CD4-positive, alpha-beta memory T cell (primary cell): ENCODE measurements at regions of chr16 and their contacts with region 1.

Region 1: GRCh38 chr16:19521471-19522396 is at the start of gene GDE1:
- DNase-seq: peak; percentile 88 to 93 (median 89)
- H3K4me3 ChIP-seq: peak within 1 kb of the TSS; percentile 87 to 89
- H3K4me3 Mint-ChIP-seq: peak within 1 kb of the TSS; percentile 95 to 99 (median 96)
- H3K27ac ChIP-seq: peak within 1 kb of the TSS; percentile 78
- H3K27ac Mint-ChIP-seq: peak within 1 kb of the TSS; percentile 73 to 98 (median 95)
- H3K4me1 ChIP-seq: peaks cover 70% of the 10 kb centered on the region
- H3K4me1 Mint-ChIP-seq: peaks cover 45 to 74% (median 55%) of the 10 kb centered on the region in 4 donors
- H3K27me3 ChIP-seq: no peaks in the 10 kb centered on the region
- H3K27me3 Mint-ChIP-seq: no peaks in the 10 kb centered on the region
- total RNA-seq, gene GDE1: 23.2 to 23.3 TPM

Region 2: GRCh38 chr16:18789850-18790724 is 731.6 kb before region 1 on chr16 and contains the start of gene RPS15A:
- CTCF ChIA-PET with region 1: no interaction called
- POLR2A ChIA-PET with region 1: no interaction called
- intact Hi-C with region 1: loop called (anchors 1 kb)
- DNase-seq: peak; percentile 90 to 98 (median 95)
- H3K4me3 ChIP-seq: peak within 1 kb of the TSS; percentile 77 to 98
- H3K4me3 Mint-ChIP-seq: peak within 1 kb of the TSS; percentile 91 to 98 (median 96)
- H3K27ac ChIP-seq: peak within 1 kb of the TSS; percentile 80
- H3K27ac Mint-ChIP-seq: peak within 1 kb of the TSS; percentile 93 to 97 (median 96)
- H3K4me1 ChIP-seq: peaks cover 43% of the 10 kb centered on the region
- H3K4me1 Mint-ChIP-seq: peaks cover 36 to 53% (median 46%) of the 10 kb centered on the region in 4 donors
- H3K27me3 ChIP-seq: no peaks in the 10 kb centered on the region
- H3K27me3 Mint-ChIP-seq: no peaks in the 10 kb centered on the region
- total RNA-seq, gene RPS15A: 3,088 to 3,151 TPM

Region 3: GRCh38 chr16:18932243-18932981 is 589.3 kb before region 1 on chr16:
- CTCF ChIA-PET with region 1: no interaction called
- POLR2A ChIA-PET with region 1: no interaction called
- intact Hi-C with region 1: loop called (anchors 10 kb)
- DNase-seq: no peak
- H3K4me3 ChIP-seq: no peak overlapping the region
- H3K4me3 Mint-ChIP-seq: no peak overlapping the region
- H3K27ac ChIP-seq: no peak overlapping the region
- H3K27ac Mint-ChIP-seq: no peak overlapping the region
- H3K4me1 ChIP-seq: no peaks in the 10 kb centered on the region
- H3K4me1 Mint-ChIP-seq: peaks cover 0 to 4% (median 0%) of the 10 kb centered on the region in 4 donors
- H3K27me3 ChIP-seq: no peaks in the 10 kb centered on the region
- H3K27me3 Mint-ChIP-seq: peaks cover 0 to under 1% of the 10 kb centered on the region in 2 donors

Region 4: GRCh38 chr16:19067349-19068236 is 454.1 kb before region 1 on chr16 and contains the start of gene COQ7:
- CTCF ChIA-PET with region 1: no interaction called
- POLR2A ChIA-PET with region 1: interaction called, 4 read pairs
- intact Hi-C with region 1: loop called (anchors 1 kb)
- DNase-seq: peak; percentile 99 to 100 (median 100)
- H3K4me3 ChIP-seq: peak within 1 kb of the TSS; percentile 79 to 99
- H3K4me3 Mint-ChIP-seq: peak within 1 kb of the TSS; percentile 92 to 96 (median 94)
- H3K27ac ChIP-seq: peak within 1 kb of the TSS; percentile 100
- H3K27ac Mint-ChIP-seq: peak within 1 kb of the TSS; percentile 93 to 99 (median 99)
- H3K4me1 ChIP-seq: peaks cover 9% of the 10 kb centered on the region
- H3K4me1 Mint-ChIP-seq: peaks cover 3 to 24% (median 14%) of the 10 kb centered on the region in 4 donors
- H3K27me3 ChIP-seq: no peaks in the 10 kb centered on the region
- H3K27me3 Mint-ChIP-seq: peaks cover 0 to 6% of the 10 kb centered on the region in 2 donors
- total RNA-seq, gene COQ7: 16.2 to 19.2 TPM

Region 5: DNA sequence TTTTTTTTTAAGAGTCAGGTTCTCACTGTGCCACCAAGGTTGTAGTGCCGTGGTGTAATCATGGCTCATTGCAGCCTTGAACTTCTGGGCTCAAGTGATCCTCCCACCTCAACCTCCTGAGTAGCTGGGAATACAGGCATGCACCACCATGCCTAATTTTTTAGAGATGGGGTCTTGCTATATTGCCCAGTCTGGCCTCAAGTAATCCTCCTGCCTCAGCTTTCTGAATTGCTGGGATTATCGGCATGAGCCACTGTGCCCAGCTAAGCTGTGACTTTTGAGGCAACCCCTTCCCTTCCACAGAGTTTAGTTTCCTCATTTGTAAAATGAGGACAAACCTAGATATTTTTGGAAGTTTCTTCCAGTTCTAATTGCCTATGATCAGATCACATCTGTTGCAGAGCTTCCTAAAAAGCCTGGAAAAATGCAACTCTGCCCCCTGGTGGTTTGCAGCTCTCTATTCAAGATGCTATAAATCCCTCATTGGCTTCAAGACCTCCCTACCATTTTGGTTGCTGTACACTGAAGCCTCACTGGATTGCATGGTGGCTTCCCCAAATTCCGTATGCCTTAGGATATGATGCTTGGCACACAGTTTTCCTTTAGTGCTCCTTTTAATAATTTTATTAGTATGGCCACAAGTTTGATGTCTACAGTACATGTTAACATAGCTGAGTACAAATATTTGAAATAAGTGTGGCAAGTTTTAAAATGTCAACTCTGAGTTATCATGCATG is 19.2 kb before region 1 on chr16:
- CTCF ChIA-PET with region 1: interaction called, 12 read pairs
- POLR2A ChIA-PET with region 1: interaction called, 7 read pairs
- intact Hi-C with region 1: no loop called
- DNase-seq: peak; percentile 46 to 62 (median 57)
- H3K4me3 ChIP-seq: no peak overlapping the region
- H3K4me3 Mint-ChIP-seq: no peak overlapping the region
- H3K27ac ChIP-seq: no peak overlapping the region
- H3K27ac Mint-ChIP-seq: peak overlapping the region in 1 of 7 donors; percentile 32
- H3K4me1 ChIP-seq: no peaks in the 10 kb centered on the region
- H3K4me1 Mint-ChIP-seq: no peaks in the 10 kb centered on the region
- H3K27me3 ChIP-seq: no peaks in the 10 kb centered on the region
- H3K27me3 Mint-ChIP-seq: no peaks in the 10 kb centered on the region

Region 6: DNA sequence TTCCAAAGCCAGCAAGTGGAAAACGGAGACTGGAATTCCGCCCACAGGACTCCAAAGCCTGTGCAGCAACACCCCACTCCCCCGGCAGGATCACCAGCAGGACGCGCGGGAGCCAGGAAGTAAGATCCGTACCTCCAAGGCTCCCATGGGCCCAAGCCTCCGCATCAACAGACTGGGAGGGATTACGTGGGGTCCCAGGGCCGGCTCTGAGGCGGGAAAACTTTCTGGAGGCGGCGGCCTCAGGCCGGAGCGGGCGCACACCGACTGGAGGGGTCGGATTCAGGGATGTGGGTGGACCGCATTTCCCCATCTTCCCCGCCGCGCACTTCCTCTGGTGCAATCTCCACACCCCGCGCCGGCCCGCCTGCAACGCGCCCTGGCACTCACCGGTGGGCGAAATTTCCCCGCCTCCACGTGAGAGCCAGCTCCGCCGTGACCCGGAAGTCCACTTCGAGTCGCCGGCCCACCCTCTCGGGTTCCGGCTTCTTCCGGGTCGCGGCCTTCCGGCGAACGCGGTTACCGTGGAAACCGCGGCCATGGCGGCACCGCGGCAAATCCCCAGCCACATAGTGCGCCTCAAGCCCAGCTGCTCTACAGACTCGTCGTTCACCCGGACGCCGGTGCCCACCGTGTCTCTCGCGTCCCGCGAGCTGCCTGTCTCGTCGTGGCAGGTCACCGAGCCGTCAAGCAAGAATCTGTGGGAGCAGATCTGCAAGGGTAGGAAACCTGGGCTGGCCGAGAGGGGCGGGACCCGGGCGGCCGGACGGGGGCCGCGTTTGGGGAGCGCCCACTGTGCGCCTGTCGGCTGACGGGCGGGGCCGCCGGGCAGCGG is 196.3 kb after region 1 on chr16 and contains the starts of genes IQCK and KNOP1:
- CTCF ChIA-PET with region 1: no interaction called
- POLR2A ChIA-PET with region 1: interaction called, 5 read pairs
- intact Hi-C with region 1: loop called (anchors 2 kb)
- DNase-seq: peak; percentile 88 to 91 (median 90)
- H3K4me3 ChIP-seq: peak within 1 kb of the TSS; percentile 93 to 96
- H3K4me3 Mint-ChIP-seq: peak within 1 kb of the TSS; percentile 92 to 95 (median 94)
- H3K27ac ChIP-seq: peak within 1 kb of the TSS; percentile 67
- H3K27ac Mint-ChIP-seq: peak within 1 kb of the TSS; percentile 84 to 95 (median 88)
- H3K4me1 ChIP-seq: peaks cover 25% of the 10 kb centered on the region
- H3K4me1 Mint-ChIP-seq: peaks cover 17 to 46% (median 34%) of the 10 kb centered on the region in 4 donors
- H3K27me3 ChIP-seq: no peaks in the 10 kb centered on the region
- H3K27me3 Mint-ChIP-seq: no peaks in the 10 kb centered on the region
- total RNA-seq, gene IQCK: 1.7 to 3.1 TPM
- total RNA-seq, gene KNOP1: 15.3 to 16.6 TPM